Left lung (tissue), 14 donors: ENCODE measurements at regions of chr1 and their contacts with region 1.

Region 1: GRCh38 chr1:94237291-94238226 is at the start of gene ARHGAP29:
- DNase-seq: peak; percentile 54 to 95 (median 82)
- ATAC-seq: peak; percentile 96
- H3K4me3 ChIP-seq: peak within 1 kb of the TSS; percentile 75 to 81
- H3K27ac ChIP-seq: peak within 1 kb of the TSS; percentile 89 to 93
- H3K4me1 ChIP-seq: peaks cover 0 to 21% of the 10 kb centered on the region in 2 donors
- H3K27me3 ChIP-seq: peaks cover 0 to 86% of the 10 kb centered on the region in 2 donors
- CTCF ChIP-seq: no peak
- polyA plus RNA-seq, gene ARHGAP29: 59.7 to 66.8 (median 64.2) TPM

Region 2: GRCh38 chr1:94061513-94062443 is 175.8 kb before region 1 on chr1:
- intact Hi-C with region 1: loop called in 1 of 2 experiments (anchors 10 kb)
- DNase-seq: peak in 2 of 4 donors; percentile 58 to 73
- ATAC-seq: peak; percentile 96
- H3K4me3 ChIP-seq: no peak overlapping the region
- H3K27ac ChIP-seq: peak overlapping the region; percentile 37 to 55
- H3K4me1 ChIP-seq: peaks cover 11 to 25% of the 10 kb centered on the region in 2 donors
- H3K27me3 ChIP-seq: no peaks in the 10 kb centered on the region
- CTCF ChIP-seq: peak; percentile 79 to 86

Region 3: DNA sequence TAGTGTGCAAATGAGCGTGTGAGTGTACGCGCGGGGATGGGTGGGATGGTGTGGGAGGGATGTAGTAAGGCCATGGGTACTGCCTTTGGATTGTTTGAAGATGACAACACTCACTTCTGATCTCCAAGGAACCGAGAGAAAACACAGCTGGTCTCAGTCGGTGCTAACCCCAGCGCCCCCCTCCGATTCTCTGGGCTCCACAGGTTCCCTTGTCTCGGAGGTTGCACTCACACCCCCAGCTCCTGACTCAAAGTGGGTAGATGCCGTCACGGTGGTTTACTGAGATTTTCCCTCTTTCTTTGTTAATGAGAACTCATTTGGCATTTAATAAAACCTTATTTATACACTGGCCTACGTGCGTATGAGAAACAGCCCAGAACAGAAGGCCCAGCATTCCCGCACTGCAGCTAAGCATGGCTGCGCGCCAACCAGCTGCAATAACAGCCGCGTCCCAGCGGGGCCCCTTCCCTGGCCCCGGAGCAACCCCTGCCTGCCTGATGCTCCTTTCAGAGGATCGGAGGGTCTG is 142.4 kb before region 1 on chr1:
- intact Hi-C with region 1: no loop called
- DNase-seq: peak in 3 of 4 donors; percentile 56 to 85 (median 74)
- ATAC-seq: peak; percentile 50
- H3K4me3 ChIP-seq: no peak overlapping the region
- H3K27ac ChIP-seq: peak overlapping the region; percentile 71 to 74
- H3K4me1 ChIP-seq: peaks cover 16 to 30% of the 10 kb centered on the region in 2 donors
- H3K27me3 ChIP-seq: peaks cover 0 to 5% of the 10 kb centered on the region in 2 donors
- CTCF ChIP-seq: no peak